ENCODE measurements at regions of chr9 and their contacts with region 1.

Region 1: DNA sequence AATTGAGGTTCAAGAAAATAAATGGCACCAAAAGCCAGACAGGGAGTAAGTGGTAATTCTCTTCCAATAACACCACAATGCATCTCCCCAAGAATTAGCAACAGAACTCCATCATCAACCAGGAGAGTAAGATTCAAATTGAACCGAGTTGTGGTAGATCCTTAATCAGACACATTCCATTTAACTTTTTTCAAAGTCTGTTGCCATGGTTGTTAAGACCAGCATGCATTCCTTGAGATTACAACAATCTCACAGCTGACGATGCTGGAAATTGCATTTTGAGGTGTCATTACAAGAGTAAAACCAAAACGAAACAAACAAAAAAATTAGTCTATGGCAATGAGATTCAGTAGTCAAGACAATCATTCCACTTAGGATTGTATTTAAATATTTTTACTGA is 78.9 kb upstream of the ZNF462 start:
- DNase-seq: no peak
- H3K4me3 ChIP-seq: no peak overlapping the region
- H3K27ac ChIP-seq: no peak overlapping the region
- H3K4me1 ChIP-seq: no peaks in the 10 kb centered on the region
- H3K27me3 ChIP-seq: no peaks in the 10 kb centered on the region
- CTCF ChIP-seq: no peak
- EP300 ChIP-seq: no peak
- POLR2A ChIP-seq: no peak

Region 2: DNA sequence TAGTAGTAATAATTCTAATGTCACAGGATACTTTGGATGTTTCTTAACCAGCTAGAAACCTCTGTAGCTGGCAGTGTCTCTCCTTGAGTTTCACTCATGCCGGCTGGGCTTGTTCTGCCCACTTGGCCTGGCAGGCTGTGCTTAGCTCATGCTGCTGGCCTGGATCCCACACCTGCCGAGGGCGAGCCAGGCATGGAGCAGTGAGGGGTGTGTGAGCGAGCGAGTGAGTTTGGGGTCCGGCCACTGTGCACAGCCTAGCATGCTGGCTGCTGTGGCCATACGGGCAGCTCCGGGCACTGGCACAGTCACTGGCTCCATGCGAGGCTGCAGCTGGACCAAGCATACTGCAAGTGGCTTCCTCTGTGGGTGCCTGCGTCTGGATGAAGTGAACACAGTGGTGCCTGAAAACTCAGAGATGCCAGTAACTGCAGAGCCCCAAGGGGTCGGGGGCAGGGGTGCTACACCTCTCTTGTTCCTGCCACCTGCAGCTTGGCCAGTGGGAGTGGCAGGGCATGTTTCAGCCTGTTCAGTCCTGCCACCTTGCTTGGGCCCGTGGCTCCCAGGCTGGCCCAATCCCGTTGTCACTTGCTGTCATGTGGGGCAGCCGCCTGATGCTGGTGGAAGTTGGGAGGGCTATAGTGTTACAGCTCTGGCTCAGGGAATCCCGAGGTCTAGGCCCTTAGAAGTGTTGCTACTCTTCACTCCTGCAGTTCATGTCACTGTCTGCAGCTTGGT is 1326.3 kb before region 1 on chr9:
- in situ Hi-C with region 1: no loop called
- intact Hi-C with region 1: loop called (anchors 10 kb)
- DNase-seq: no peak
- H3K4me3 ChIP-seq: no peak overlapping the region
- H3K27ac ChIP-seq: no peak overlapping the region
- H3K4me1 ChIP-seq: peaks cover 0 to 8% (median 0%) of the 10 kb centered on the region in 4 donors
- H3K27me3 ChIP-seq: no peaks in the 10 kb centered on the region
- CTCF ChIP-seq: no peak
- EP300 ChIP-seq: no peak
- POLR2A ChIP-seq: no peak

Region 3: GRCh38 chr9:106174331-106174730 is 609.7 kb before region 1 on chr9:
- in situ Hi-C with region 1: no loop called
- intact Hi-C with region 1: no loop called
- DNase-seq: no peak
- H3K4me3 ChIP-seq: no peak overlapping the region
- H3K27ac ChIP-seq: no peak overlapping the region
- H3K4me1 ChIP-seq: peaks cover 0 to 7% (median 1%) of the 10 kb centered on the region in 4 donors
- H3K27me3 ChIP-seq: no peaks in the 10 kb centered on the region
- CTCF ChIP-seq: no peak
- EP300 ChIP-seq: no peak
- POLR2A ChIP-seq: no peak

Region 4: DNA sequence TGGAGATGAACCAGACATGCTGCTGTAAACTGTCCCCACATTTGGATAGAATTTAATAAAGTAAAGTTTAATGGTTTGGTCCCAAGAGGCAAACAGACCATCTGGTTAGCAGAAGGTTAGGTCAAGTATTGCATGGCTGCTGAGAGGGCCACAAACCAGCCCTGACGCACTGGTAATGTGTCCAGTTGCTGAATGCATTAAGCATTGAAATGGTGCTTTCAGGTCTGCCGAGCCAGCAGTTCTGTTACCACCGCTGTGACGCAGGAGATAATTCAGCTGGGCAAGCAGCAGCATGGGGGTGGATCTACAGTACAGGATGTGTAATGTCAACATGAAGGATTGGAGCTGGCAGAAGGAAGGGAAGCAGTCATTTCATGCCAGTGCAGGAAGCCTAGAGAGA is 94.8 kb after region 1 on chr9:
- in situ Hi-C with region 1: no loop called
- intact Hi-C with region 1: no loop called
- DNase-seq: peak; percentile 58
- H3K4me3 ChIP-seq: no peak overlapping the region
- H3K27ac ChIP-seq: peak overlapping the region; percentile 42 to 79 (median 69)
- H3K4me1 ChIP-seq: peaks cover 22 to 62% (median 26%) of the 10 kb centered on the region in 4 donors
- H3K27me3 ChIP-seq: no peaks in the 10 kb centered on the region
- CTCF ChIP-seq: no peak
- EP300 ChIP-seq: no peak
- POLR2A ChIP-seq: no peak

Measured in transverse colon (tissue), 4 donors.